GM10248 (cell line): ENCODE measurements at regions of chr14 and their contacts with region 1.

Region 1: GRCh38 chr14:23113431-23114119 is 5.5 kb downstream of the CEBPE start:
- DNase-seq: peak; percentile 5
- CTCF ChIP-seq: no peak

Region 2: GRCh38 chr14:23095196-23096108 is 18.1 kb before region 1 on chr14 and contains the start of gene C14orf119:
- CTCF ChIA-PET with region 1: interaction called, 11 read pairs
- POLR2A ChIA-PET with region 1: no interaction called
- DNase-seq: peak; percentile 99
- CTCF ChIP-seq: no peak